ENCODE measurements at regions of chr16 and their contacts with region 1.

Region 1: GRCh38 chr16:28211712-28212534 is at the start of gene XPO6:
- DNase-seq: peak; percentile 89
- ATAC-seq: peak; percentile 90
- H3K4me3 ChIP-seq: peak within 1 kb of the TSS; percentile 77
- H3K27ac ChIP-seq: peak within 1 kb of the TSS; percentile 94
- H3K4me1 ChIP-seq: peaks cover 8% of the 10 kb centered on the region
- H3K27me3 ChIP-seq: no peaks in the 10 kb centered on the region
- CTCF ChIP-seq: no peak
- POLR2A ChIP-seq: peak; percentile 72
- RAD21 ChIP-seq: no peak
- total RNA-seq, gene XPO6: 103 and 108 TPM in 2 replicates

Region 2: DNA sequence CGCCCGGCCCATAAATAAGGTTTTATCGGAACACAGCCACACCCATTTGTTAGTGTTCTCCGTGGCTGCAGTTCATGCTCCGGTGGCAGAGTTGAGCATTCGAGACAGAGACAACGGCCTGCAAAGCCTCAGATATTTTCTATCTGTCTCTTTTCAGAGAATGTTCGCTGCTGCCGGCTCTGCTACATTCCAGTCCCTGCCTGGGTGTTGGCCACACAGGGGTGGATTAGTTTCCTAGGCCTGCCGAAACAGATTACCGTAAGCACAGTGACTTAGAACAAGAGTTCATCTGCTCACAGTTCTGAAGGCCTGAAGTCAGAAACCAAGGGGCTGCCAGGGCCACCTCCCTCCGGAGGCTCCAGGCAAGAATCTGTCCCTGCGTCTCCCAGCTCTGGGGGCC is 129.3 kb before region 1 on chr16:
- CTCF ChIA-PET with region 1: no interaction called
- POLR2A ChIA-PET with region 1: interaction called, 10 read pairs
- dilution Hi-C with region 1: no loop called
- in situ Hi-C with region 1: no loop called
- intact Hi-C with region 1: no loop called
- DNase-seq: no peak
- ATAC-seq: no peak
- H3K4me3 ChIP-seq: no peak overlapping the region
- H3K27ac ChIP-seq: no peak overlapping the region
- H3K4me1 ChIP-seq: no peaks in the 10 kb centered on the region
- H3K27me3 ChIP-seq: peaks cover 4% of the 10 kb centered on the region; the same call in 1 of the 2 replicates
- CTCF ChIP-seq: no peak
- POLR2A ChIP-seq: no peak
- RAD21 ChIP-seq: no peak

Region 3: GRCh38 chr16:28140788-28141618 is 70.9 kb before region 1 on chr16:
- CTCF ChIA-PET with region 1: no interaction called
- POLR2A ChIA-PET with region 1: no interaction called
- dilution Hi-C with region 1: no loop called
- in situ Hi-C with region 1: loop called (anchors 5 kb)
- intact Hi-C with region 1: loop called (anchors 5 kb)
- DNase-seq: no peak
- ATAC-seq: no peak
- H3K4me3 ChIP-seq: no peak overlapping the region
- H3K27ac ChIP-seq: peak overlapping the region; percentile 5; the same call in 1 of the 2 replicates
- H3K4me1 ChIP-seq: peaks cover 4% of the 10 kb centered on the region
- H3K27me3 ChIP-seq: no peaks in the 10 kb centered on the region
- CTCF ChIP-seq: no peak
- POLR2A ChIP-seq: no peak
- RAD21 ChIP-seq: no peak

Region 4: DNA sequence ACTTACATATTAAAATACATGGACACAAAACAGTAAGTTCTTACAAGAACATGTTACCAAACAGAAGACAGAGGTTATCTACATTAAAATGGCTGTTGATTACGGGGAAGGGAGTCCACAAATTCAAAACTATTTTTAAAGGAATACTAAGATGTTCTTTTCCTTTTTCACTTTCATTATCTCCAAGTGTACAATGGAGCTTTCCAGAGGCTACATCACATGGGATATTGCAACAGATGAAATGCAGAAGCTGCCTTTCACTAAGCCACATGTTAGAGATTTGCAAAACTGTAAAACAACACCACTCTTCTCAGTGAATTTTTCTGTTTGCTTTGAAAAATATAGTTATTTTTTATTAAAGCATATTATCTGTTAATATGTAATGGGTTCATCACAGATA is 53.8 kb before region 1 on chr16:
- CTCF ChIA-PET with region 1: interaction called, 3 read pairs
- POLR2A ChIA-PET with region 1: no interaction called
- dilution Hi-C with region 1: no loop called
- in situ Hi-C with region 1: no loop called
- intact Hi-C with region 1: loop called (anchors 5 kb)
- DNase-seq: peak; percentile 59
- ATAC-seq: peak; percentile 54
- H3K4me3 ChIP-seq: no peak overlapping the region
- H3K27ac ChIP-seq: peak overlapping the region; percentile 92; the same call in 1 of the 2 replicates
- H3K4me1 ChIP-seq: peaks cover 9% of the 10 kb centered on the region; the same call in 1 of the 2 replicates
- H3K27me3 ChIP-seq: no peaks in the 10 kb centered on the region
- CTCF ChIP-seq: no peak
- POLR2A ChIP-seq: no peak
- RAD21 ChIP-seq: no peak

Measured in IMR-90 (cell line).